Heart left ventricle (tissue), 16 donors: ENCODE measurements at regions of chr17 and their contacts with region 1.

Region 1: GRCh38 chr17:78925234-78925633 is at the start of gene TIMP2:
- DNase-seq: peak; percentile 89 to 95 (median 94)
- ATAC-seq: peak in 3 of 4 donors; percentile 66 to 72 (median 72)
- H3K4me3 ChIP-seq: peak within 1 kb of the TSS; percentile 69 to 94 (median 77)
- H3K27ac ChIP-seq: peak within 1 kb of the TSS; percentile 73 to 99 (median 93)
- H3K4me1 ChIP-seq: peaks cover 6 to 58% (median 43%) of the 10 kb centered on the region in 12 donors
- H3K27me3 ChIP-seq: no peaks in the 10 kb centered on the region
- CTCF ChIP-seq: peak in 10 of 12 donors; percentile 23 to 52 (median 32)
- POLR2A ChIP-seq: peak in 1 of 2 donors; percentile 43
- total RNA-seq, gene TIMP2: 65.6 to 201 (median 98.3) TPM

Region 2: GRCh38 chr17:78865682-78866390 is 59.4 kb before region 1 on chr17:
- intact Hi-C with region 1: loop called in 4 of 10 experiments (anchors 5 to 10 kb)
- DNase-seq: peak; percentile 81 to 87 (median 83)
- ATAC-seq: peak; percentile 64 to 85 (median 78)
- H3K4me3 ChIP-seq: peak overlapping the region in 7 of 12 donors; percentile 11 to 37 (median 31)
- H3K27ac ChIP-seq: peak overlapping the region in 7 of 12 donors; percentile 21 to 56 (median 30)
- H3K4me1 ChIP-seq: peaks cover 0 to 34% (median 11%) of the 10 kb centered on the region in 12 donors
- H3K27me3 ChIP-seq: no peaks in the 10 kb centered on the region
- CTCF ChIP-seq: peak; percentile 85 to 98 (median 94)
- POLR2A ChIP-seq: no peak

Region 3: DNA sequence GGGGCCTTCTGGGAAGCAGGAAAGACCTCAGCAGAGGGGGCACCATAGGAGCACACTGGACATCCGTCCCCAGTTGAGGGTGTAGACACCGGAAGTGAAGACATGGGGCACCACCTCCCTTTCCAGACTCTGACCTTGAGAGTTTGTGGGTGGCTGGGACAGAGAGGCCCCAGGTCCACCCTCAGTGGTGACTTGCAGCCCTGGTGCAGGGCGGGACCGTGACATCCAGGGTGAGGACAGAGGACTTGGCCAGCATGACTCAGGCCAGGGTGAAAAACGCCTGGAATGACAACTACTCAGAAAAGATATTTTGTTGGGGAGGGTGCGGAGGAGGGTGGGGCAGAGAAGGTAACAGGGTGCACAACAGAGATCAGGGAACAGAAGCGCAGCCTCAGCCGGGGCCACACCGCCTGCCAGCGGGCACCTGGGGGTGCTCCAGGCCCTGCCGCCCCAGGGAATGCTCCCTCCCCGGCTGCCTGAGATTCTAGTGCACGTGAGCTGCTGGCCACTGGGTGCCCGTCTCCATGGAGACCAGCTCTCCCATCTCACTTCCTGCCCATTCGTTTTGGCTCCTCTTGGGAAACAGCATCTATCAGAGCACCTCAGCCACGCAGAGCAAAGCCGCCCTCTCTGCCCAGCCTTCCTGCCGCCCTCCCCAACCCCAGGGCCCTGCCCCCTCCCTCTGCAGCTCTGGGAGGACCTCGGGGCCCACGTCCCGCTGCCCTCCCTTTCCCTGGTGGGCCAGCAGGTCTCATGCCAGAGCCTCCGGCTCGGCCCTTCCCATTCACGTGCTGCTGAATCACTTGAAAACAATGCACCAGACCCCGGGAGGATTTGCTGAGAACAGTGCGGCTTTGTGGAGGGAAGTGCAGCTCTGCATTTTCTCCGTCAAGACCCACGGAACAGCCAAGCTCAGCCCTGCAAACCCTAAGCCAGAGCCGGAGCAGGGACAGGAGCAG is 41.8 kb before region 1 on chr17:
- intact Hi-C with region 1: loop called (anchors 2 to 5 kb)
- DNase-seq: peak; percentile 81 to 90 (median 88)
- ATAC-seq: peak; percentile 53 to 77 (median 76)
- H3K4me3 ChIP-seq: peak overlapping the region in 10 of 12 donors; percentile 6 to 50 (median 29)
- H3K27ac ChIP-seq: peak overlapping the region; percentile 86 to 98 (median 96)
- H3K4me1 ChIP-seq: peaks cover 9 to 78% (median 71%) of the 10 kb centered on the region in 12 donors
- H3K27me3 ChIP-seq: no peaks in the 10 kb centered on the region
- CTCF ChIP-seq: peak in 1 of 12 donors; percentile 7
- POLR2A ChIP-seq: peak in 1 of 2 donors; percentile 41

Region 4: DNA sequence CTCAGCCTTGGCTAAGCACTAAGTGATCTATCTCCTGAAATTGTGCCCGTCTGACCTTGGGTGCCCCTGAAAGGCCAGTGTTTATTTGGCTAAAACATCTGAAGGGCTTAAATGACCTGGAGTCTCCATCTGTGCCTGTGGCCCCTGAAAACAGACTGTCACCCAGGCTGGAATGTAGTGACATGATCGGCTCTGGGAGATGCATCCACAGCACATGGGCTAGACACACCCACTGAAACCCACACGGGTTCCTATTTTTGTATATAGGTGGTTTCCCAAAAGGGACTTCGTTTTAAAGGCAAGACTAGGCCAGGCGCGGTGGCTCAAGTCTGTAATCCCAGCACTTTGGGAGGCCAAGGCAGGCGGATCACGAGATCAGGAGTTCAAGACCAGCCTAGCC is 35.7 kb before region 1 on chr17:
- intact Hi-C with region 1: loop called (anchors 2 to 5 kb)
- DNase-seq: no peak
- ATAC-seq: no peak
- H3K4me3 ChIP-seq: no peak overlapping the region
- H3K27ac ChIP-seq: peak overlapping the region in 5 of 12 donors; percentile 18 to 86 (median 46)
- H3K4me1 ChIP-seq: peaks cover 10 to 75% (median 52%) of the 10 kb centered on the region in 12 donors
- H3K27me3 ChIP-seq: no peaks in the 10 kb centered on the region
- CTCF ChIP-seq: no peak
- POLR2A ChIP-seq: no peak

Region 5: DNA sequence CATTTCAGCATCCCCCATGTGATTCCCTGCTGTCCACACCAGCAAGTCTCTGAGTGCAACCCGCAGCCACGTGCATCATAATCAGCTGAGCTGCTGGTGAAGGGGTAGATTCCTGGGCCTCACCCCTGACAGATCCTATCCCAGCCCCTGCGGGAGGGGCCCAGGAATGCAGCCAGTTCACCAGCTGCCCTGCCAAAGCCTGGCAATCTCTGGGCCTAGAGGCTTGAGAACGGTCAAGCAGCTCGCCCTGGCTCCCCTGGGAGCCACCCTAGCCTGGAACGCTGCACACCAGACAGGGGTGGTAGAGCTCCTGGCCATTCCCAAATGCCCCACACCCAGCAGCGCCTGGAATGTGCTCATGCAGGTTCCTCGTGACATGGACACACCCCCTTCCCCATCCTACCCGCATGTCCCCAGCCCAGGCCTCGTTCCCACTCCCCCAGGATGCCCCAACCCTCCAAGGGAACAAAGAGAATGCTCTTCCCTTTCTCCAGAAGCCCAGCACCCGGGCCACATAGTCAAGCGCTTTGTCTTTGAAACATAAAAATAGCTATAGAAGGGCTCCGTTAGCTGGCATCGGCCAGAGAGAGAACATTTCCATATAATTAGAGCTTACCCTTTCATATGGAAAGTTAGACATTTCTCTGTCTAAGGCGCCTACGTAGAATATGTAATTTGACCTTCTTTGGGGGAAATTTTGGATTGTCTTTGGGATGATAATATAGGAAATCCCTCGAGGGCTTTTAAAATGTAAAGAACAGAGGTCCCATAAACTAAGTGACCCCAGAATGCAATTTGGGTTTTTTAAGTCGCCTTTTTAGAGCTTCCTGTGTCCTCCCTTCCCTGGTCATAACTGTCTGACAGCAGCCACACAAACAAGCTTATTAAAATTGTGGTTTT is 25.6 kb before region 1 on chr17:
- intact Hi-C with region 1: loop called in 1 of 10 experiments (anchors 2 kb)
- DNase-seq: peak in 4 of 5 donors; percentile 56 to 84 (median 62)
- ATAC-seq: peak; percentile 52 to 88 (median 69)
- H3K4me3 ChIP-seq: no peak overlapping the region
- H3K27ac ChIP-seq: peak overlapping the region in 11 of 12 donors; percentile 31 to 77 (median 55)
- H3K4me1 ChIP-seq: peaks cover 2 to 76% (median 57%) of the 10 kb centered on the region in 12 donors
- H3K27me3 ChIP-seq: no peaks in the 10 kb centered on the region
- CTCF ChIP-seq: no peak
- POLR2A ChIP-seq: no peak

Region 6: DNA sequence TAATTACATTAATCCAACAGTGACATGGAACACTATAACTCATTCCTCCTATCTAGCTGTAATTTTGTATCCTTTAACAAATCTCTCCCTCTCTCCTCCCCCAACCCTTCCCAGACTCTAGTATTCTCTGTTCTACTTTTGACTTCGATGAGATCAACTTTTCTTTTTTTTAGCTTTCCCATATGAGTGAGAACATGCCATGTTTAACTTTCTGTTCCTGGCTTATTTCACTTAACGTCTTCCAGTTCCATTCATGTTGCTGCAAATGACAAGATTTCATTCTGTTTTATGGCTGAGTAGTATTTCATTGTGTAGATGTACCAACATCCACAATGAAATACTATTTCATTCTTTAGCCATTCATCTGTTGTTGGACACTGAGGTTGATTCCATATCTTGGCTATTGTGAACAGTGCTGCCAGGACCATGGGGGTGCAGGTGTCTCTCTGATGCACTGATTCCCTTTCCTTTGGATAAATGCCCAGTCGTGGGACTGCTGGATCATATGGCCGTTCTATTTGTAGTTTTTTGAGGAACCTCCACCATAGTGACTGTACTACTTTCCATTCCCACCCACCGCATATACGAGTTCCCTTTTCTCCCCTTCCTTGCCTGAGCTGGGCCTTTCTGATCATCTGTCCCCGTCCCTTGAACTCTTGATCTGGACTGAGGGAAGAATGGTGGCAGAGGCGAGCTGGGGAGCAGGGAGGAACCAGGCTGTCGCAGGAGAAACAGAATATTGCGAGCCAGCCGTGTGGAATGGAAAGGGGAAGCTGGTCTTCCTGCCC is 14.5 kb before region 1 on chr17:
- intact Hi-C with region 1: no loop called
- DNase-seq: peak in 1 of 5 donors; percentile 51
- ATAC-seq: peak in 3 of 4 donors; percentile 35 to 80 (median 79)
- H3K4me3 ChIP-seq: no peak overlapping the region
- H3K27ac ChIP-seq: peak overlapping the region in 2 of 12 donors; percentile 7 to 86
- H3K4me1 ChIP-seq: peaks cover 3 to 57% (median 21%) of the 10 kb centered on the region in 12 donors
- H3K27me3 ChIP-seq: no peaks in the 10 kb centered on the region
- CTCF ChIP-seq: no peak
- POLR2A ChIP-seq: no peak

Region 7: DNA sequence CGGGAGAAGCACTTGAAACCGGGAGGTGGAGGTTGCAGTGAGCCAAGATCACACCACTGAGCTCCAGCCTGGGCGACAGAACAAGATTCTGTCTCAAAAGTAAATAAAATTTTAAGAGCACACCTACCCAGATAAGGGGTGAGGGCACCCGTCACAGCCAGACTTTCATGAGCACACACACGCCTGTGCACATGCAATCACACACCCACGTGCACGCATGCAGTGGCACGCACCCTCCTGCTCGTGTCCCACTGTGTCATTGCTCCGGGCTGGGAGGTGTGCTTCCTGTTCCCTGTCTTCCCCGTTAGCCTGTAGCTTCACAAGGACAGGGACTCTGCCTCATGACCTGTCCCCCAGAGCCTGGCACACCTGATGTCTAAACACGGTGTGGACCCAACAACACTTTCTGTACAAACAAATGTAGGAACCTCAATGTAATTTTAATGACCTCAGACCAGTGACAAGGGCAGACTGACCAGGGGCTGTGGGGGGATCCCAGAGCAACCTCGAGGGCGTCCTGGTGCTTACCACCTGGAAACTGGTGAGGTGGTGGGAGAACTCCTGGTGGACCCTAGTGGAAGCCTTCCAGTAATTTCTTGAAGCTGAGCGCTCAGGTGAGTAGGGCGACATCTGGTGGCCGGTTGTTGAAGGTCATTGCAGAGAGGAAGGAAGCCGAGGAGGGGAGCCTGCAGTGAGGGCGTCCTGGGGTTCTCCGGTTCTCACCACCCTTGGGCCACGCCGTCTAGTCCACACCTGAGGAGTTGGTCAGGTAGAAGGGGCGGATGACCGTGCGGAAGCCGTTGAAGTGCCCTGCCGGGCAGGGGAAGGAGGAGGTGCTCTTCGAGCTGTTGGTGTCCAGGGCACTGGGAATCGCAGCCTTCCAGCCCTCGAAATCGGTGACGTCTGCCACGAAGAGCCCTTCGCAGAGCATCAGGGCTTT is 45.9 kb after region 1 on chr17:
- intact Hi-C with region 1: loop called in 5 of 10 experiments (anchors 2 to 10 kb)
- DNase-seq: peak; percentile 79 to 88 (median 84)
- ATAC-seq: peak in 3 of 4 donors; percentile 39 to 49 (median 43)
- H3K4me3 ChIP-seq: no peak overlapping the region
- H3K27ac ChIP-seq: peak overlapping the region in 9 of 12 donors; percentile 11 to 72 (median 51)
- H3K4me1 ChIP-seq: peaks cover 0 to 54% (median 26%) of the 10 kb centered on the region in 12 donors
- H3K27me3 ChIP-seq: no peaks in the 10 kb centered on the region
- CTCF ChIP-seq: peak; percentile 82 to 94 (median 88)
- POLR2A ChIP-seq: no peak